Activated naive CD8-positive, alpha-beta T cell treated with anti-CD3 and anti-CD28 coated beads, Interleukin-2, amount 10 ng/mL, durations not matched to agents 7 days and 5 days (primary cell): ENCODE measurements at regions of chr17 and their contacts with region 1.

Region 1: GRCh38 chr17:79839363-79840268 is at the start of gene CBX4:
- DNase-seq: peak; percentile 93
- ATAC-seq: peak; percentile 76
- H3K4me3 Mint-ChIP-seq: peak within 1 kb of the TSS; percentile 99
- H3K27ac Mint-ChIP-seq: peak within 1 kb of the TSS; percentile 96
- H3K4me1 Mint-ChIP-seq: peaks cover 19% of the 10 kb centered on the region
- H3K27me3 Mint-ChIP-seq: peaks cover 29% of the 10 kb centered on the region
- total RNA-seq, gene CBX4: 53.8 to 54.4 TPM

Region 2: GRCh38 chr17:79732804-79733691 is 106.6 kb before region 1 on chr17:
- POLR2A ChIA-PET with region 1: no interaction called
- DNase-seq: no peak
- ATAC-seq: no peak
- H3K4me3 Mint-ChIP-seq: peak overlapping the region; percentile 62
- H3K27ac Mint-ChIP-seq: peak overlapping the region; percentile 73
- H3K4me1 Mint-ChIP-seq: peaks cover 5% of the 10 kb centered on the region
- H3K27me3 Mint-ChIP-seq: no peaks in the 10 kb centered on the region

Region 3: DNA sequence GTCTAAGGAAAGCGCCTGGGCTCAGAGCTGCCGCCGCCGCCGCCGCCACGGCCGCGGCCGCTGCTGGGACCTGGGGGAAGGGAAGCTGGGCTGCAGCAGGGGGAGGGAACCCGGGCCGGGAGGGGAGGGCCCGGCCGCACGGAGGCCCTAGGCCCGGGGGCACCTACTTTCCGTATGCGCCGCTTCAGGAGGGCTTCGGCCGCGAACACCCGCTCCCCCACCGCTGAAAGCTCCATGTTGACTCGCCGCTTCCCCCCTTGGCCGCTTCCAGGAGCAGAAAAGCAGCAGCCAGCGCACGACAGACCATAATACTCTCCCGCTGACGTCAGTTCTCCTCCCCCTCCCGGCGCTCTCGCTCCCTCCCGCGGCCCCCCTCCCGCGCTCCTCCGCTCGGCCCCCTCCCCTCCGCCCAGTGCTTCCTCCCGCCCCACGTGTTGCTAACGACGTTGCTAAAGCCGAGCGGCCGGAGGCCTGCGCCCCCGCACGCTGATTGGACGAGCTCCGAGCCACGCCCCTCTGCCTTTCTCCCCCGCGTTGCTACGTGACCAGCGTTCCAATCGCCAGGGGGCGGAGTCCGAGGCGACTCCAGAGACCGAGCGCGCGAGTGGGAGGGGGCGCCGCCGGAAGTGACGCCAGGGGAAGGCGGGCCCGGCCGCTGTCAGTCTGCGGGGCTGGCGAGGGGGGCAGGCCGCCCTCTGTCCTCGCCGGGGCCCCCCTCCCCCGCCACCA is 42.7 kb before region 1 on chr17 and contains the start of gene CBX8:
- POLR2A ChIA-PET with region 1: interaction called, 45 read pairs
- DNase-seq: peak; percentile 99
- ATAC-seq: peak; percentile 89
- H3K4me3 Mint-ChIP-seq: peak within 1 kb of the TSS; percentile 89
- H3K27ac Mint-ChIP-seq: peak within 1 kb of the TSS; percentile 84
- H3K4me1 Mint-ChIP-seq: peaks cover 27% of the 10 kb centered on the region
- H3K27me3 Mint-ChIP-seq: peaks cover 35% of the 10 kb centered on the region
- total RNA-seq, gene CBX8: 4.9 to 5.5 TPM

Region 4: GRCh38 chr17:79803997-79804855 is 35.4 kb before region 1 on chr17:
- POLR2A ChIA-PET with region 1: interaction called, 76 read pairs
- DNase-seq: peak; percentile 75
- ATAC-seq: peak; percentile 62
- H3K4me3 Mint-ChIP-seq: peak overlapping the region; percentile 62
- H3K27ac Mint-ChIP-seq: peak overlapping the region; percentile 73
- H3K4me1 Mint-ChIP-seq: peaks cover 37% of the 10 kb centered on the region
- H3K27me3 Mint-ChIP-seq: peaks cover 80% of the 10 kb centered on the region

Region 5: DNA sequence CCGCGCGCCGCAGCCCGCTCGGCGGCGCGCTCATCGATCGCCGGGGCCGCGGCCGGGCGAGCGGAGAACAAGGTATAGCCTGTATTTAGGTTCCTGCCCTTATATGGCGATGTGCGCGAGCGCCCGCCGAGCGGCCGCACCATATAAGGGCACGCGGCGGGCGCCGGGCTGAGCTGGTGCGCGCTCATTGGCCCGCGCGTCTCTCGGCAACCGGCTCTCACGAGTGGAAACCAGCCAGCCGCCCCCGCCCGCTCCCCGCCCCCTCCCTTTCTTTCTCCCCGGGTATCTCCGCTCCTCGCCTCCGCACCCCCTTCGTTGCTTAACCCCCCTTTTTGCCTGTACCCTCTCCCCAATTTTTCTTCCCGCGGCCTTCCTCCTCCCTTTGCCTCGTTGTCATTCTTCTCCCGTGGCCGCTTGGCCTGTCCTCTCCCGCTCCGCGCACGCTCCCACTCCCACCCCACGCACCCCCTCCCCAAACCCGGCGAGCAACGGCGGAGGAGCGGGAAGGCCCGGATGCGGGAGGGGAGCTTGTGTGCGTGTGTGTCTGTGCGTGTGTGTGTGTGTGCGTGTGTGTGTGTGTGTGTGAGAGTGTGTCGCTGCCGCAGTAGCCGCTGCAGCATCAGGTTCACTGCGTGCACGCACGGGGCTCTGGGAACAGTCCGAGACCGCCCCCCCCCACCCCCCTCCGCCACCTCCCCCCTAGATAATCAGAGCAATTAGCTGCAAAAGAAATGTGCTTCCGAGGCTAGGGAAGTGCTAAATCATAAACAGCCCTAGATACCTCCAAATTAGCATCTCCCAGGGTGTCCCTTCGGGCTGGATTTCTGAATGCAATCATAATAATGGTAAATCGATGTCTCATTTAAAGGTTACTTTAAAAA is 29.2 kb before region 1 on chr17:
- POLR2A ChIA-PET with region 1: interaction called, 76 read pairs
- DNase-seq: peak; percentile 82
- ATAC-seq: peak; percentile 87
- H3K4me3 Mint-ChIP-seq: peak overlapping the region; percentile 45
- H3K27ac Mint-ChIP-seq: no peak overlapping the region
- H3K4me1 Mint-ChIP-seq: peaks cover 26% of the 10 kb centered on the region
- H3K27me3 Mint-ChIP-seq: peaks cover 68% of the 10 kb centered on the region

Region 6: DNA sequence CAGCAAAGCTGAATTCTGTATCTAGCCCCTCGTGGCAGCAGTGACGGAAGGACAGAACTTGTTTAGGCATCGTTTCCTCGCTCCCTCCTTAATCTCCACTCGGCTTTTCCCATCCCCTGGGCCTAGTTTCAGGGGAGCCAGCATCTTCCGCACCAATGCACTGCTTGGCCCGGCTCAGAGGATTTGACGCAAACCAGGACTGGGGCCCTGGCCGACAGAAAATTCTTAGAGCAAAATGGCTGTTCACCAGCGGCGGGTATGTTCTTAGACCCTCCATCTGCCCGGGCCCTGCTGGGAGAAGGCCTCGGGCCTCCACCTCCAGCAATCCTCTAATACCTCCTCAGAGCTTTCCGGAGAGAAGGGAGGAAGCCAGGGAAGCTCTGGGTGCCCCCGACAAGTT is 141.5 kb after region 1 on chr17:
- POLR2A ChIA-PET with region 1: no interaction called
- DNase-seq: peak; percentile 13
- ATAC-seq: no peak
- H3K4me3 Mint-ChIP-seq: no peak overlapping the region
- H3K27ac Mint-ChIP-seq: no peak overlapping the region
- H3K4me1 Mint-ChIP-seq: no peaks in the 10 kb centered on the region
- H3K27me3 Mint-ChIP-seq: no peaks in the 10 kb centered on the region

Region 7: DNA sequence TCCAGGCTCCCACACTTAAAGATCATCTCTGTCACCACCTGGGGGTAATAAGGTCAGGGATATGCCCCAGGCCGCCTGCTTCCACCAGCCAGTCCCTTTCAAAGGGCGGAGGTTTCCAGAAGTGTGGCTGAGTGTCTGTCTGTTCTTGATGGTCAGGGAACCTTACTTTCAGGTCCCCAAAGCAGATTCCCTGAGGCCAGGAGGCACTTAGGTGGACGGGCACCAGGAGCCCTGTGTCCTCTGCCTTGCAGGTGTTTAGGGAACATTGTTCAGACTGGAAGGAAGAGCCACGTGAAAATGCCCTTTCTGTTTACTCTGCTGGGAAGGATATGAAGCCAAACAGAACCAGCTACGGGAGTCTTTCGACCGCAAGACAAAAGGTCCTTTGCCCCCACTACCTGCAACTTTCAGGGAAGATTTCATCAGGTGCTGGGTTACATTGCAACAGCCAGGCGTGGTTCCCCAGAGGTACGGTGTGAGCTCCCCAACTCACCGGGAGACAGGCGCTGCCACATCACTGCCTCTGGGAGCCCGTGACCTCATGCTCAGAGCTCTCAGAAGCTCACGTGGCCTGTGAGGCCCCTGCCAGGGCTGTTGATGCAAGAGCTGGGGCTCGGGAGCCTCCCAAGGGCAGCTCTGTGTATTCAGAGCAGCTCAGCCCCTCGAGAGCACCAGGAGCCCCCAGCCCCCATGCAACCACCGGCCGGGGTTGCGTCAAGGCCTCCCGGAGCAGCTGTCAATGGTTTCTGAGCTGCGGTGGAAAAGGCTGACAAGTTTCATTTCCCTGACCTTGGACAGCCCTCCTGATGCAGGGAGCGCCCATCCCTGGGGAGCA is 153.8 kb after region 1 on chr17:
- POLR2A ChIA-PET with region 1: interaction called, 23 read pairs
- DNase-seq: peak; percentile 62
- ATAC-seq: peak; percentile 27
- H3K4me3 Mint-ChIP-seq: peak overlapping the region; percentile 48
- H3K27ac Mint-ChIP-seq: peak overlapping the region; percentile 76
- H3K4me1 Mint-ChIP-seq: peaks cover 40% of the 10 kb centered on the region
- H3K27me3 Mint-ChIP-seq: no peaks in the 10 kb centered on the region